Posterior cingulate gyrus (tissue), 11 donors: ENCODE measurements at regions of chr22 and their contacts with region 1.

Region 1: GRCh38 chr22:50146439-50147238 is 23.9 kb upstream of the PANX2 start:
- DNase-seq: peak; percentile 63 to 97 (median 78)

Region 2: DNA sequence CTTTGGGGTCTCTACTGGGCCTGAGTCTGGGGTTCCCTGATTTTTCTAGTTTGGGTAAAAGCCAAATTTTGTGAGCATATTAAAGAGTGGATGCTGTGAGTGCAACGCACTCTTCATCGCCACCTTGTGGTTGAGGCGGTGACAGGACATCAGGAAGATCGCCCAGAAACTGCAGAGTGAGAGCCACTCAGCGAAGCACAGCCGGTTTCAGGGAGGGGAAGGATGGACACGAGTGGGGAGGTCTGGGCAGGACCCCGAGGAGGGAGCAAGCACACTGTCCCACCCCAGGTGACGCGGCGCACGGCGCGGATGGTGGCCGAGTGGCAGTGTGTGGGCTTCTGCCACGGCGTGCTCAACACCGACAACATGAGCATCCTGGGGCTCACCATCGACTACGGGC is 63.3 kb after region 1 on chr22:
- intact Hi-C with region 1: loop called (anchors 2 kb)
- DNase-seq: peak in 7 of 10 donors; percentile 60 to 94 (median 73)

Region 3: GRCh38 chr22:50306753-50307749 is 160.4 kb after region 1 on chr22 and contains the start of gene PLXNB2:
- intact Hi-C with region 1: no loop called
- DNase-seq: peak; percentile 55 to 97 (median 82)